Common myeloid progenitor, CD34-positive (primary cell): ENCODE measurements at regions of chr20 and their contacts with region 1.

Region 1: GRCh38 chr20:58209652-58210397 is 18.6 kb downstream of the ANKRD60 start:
- DNase-seq: peak; percentile 76 to 87 (median 81)
- H3K4me3 ChIP-seq: peak overlapping the region in 1 of 7 experiments; percentile 19
- H3K27ac ChIP-seq: no peak overlapping the region
- H3K4me1 ChIP-seq: no peaks in the 10 kb centered on the region
- H3K27me3 ChIP-seq: peaks cover 0 to 19% (median 2%) of the 10 kb centered on the region in 5 experiments

Region 2: DNA sequence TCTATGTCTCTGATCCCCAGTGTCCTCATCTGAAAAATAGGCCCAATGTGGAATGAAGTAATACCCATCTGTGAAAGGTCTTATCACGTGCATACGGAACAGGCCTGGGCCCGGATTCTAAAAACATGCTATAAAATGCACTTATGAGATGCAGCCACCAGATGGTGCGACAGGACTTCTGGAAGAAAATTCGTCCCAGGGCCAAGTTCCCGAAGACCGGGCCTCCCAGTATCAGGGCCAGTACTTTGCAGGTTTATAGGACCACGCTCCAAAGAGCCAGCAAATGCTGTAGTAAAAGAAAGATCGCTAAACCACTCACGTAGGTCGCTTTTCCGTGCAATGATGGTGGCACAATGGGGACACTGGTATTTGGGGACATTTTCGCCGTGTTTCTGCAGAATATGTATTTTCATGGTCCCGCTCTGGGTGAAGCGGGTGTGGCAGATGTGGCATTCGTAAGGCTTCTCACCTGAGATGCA is 695.5 kb before region 1 on chr20:
- CTCF ChIA-PET with region 1: interaction called, 32 read pairs
- POLR2A ChIA-PET with region 1: no interaction called
- DNase-seq: peak; percentile 56 to 75 (median 68)
- H3K4me3 ChIP-seq: no peak overlapping the region
- H3K27ac ChIP-seq: no peak overlapping the region
- H3K4me1 ChIP-seq: no peaks in the 10 kb centered on the region
- H3K27me3 ChIP-seq: peaks cover 0 to 8% (median 0%) of the 10 kb centered on the region in 5 experiments

Region 3: DNA sequence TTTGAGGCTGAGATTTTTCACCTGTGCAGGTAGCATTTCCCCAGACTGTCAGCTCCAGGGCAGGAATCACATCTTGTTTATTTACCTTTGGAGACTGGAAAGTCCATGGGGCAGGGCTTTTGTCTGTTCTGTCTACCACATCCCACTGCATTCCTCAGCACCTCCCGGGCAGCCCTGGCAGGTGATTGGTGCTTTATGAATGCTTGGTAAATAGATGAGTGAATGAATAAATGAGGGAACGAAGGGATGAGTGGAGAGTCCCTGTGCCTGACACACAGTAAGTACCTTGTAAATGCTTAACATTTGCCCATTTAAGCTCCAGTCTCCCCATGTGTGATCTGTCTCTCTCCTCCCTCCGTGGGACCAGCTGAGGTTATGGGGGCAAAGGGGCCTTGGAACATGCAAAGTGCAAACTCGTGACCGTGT is 430.4 kb before region 1 on chr20:
- CTCF ChIA-PET with region 1: no interaction called
- POLR2A ChIA-PET with region 1: no interaction called
- DNase-seq: no peak
- H3K4me3 ChIP-seq: no peak overlapping the region
- H3K27ac ChIP-seq: no peak overlapping the region
- H3K4me1 ChIP-seq: no peaks in the 10 kb centered on the region
- H3K27me3 ChIP-seq: peaks cover 0 to 2% (median 0%) of the 10 kb centered on the region in 5 experiments

Region 4: DNA sequence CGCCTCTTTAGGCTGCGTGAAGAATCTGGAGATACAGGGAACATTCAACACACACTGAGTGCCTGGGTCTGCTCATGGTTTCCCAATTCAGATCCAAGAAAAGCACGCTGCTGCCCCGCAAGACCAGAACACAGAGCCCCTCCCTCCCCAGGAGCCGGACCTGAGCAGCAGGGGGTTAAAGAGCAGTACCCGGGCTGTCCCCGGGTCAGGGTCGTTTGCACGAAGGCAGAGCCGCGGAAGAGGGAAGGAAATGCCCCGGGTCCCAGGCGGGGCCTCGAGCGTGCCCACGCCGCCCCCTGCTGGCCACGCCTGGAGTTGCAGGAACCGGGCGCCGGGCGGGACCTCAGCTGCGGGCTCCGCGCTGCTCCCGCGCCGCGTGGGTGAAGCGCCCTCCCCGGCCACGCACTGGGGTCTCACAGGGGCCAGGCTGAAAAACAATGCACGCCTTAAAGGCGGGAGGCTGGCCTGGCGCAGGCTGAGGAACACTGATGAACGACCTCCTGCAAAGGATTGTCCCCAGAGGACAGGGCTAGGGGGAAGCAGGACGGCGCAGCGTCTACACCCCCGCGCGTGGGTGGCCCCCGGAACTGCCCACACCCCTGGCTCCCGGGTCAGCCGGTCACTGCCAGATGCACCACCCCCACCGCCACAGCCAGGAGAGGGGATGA is 30.3 kb before region 1 on chr20:
- CTCF ChIA-PET with region 1: interaction called, 13 read pairs
- POLR2A ChIA-PET with region 1: no interaction called
- DNase-seq: peak; percentile 47 to 71 (median 68)
- H3K4me3 ChIP-seq: peak overlapping the region in 5 of 7 experiments; percentile 26 to 69 (median 44)
- H3K27ac ChIP-seq: no peak overlapping the region
- H3K4me1 ChIP-seq: peaks cover 1 to 14% (median 9%) of the 10 kb centered on the region in 4 experiments
- H3K27me3 ChIP-seq: peaks cover 0 to 17% (median 2%) of the 10 kb centered on the region in 5 experiments

Region 5: DNA sequence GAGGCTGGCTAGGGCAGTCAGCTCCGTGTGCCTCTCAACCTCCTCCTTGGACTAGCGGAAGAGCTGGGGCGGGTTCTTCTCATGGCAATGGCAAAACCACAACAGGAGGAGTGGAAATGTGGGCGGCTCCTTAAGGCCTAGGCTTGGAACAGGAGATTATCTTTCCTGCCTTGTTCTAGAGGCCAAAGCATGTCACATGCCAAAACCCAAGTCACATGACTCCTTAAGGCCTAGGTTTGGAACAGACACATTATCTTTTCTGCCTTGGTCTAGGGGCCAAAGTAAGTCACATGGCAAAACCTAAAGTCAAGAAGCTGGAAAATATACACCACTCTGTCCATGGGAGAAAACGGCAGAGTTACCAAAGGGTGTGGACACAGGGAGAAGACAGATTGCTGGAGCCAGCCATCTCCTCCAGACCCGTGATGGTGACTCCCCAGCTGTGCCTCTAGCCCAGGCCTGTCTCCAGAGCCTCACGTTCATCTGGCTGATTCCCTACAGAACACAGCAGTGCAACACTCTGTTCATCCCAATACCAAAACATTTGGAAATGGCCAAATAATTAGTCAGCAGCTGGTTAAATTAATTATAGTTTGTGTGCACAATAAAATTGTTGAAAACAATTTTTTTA is 15.5 kb before region 1 on chr20:
- CTCF ChIA-PET with region 1: interaction called, 13 read pairs
- POLR2A ChIA-PET with region 1: no interaction called
- DNase-seq: no peak
- H3K4me3 ChIP-seq: no peak overlapping the region
- H3K27ac ChIP-seq: no peak overlapping the region
- H3K4me1 ChIP-seq: no peaks in the 10 kb centered on the region
- H3K27me3 ChIP-seq: peaks cover 0 to 7% (median 0%) of the 10 kb centered on the region in 5 experiments